Breast epithelium (tissue), 4 donors: ENCODE measurements at regions of chr14 and their contacts with region 1.

Region 1: GRCh38 chr14:101721951-101722661 is 39.4 kb upstream of the PPP2R5C start:
- DNase-seq: peak in 1 of 2 donors; percentile 55
- H3K4me3 ChIP-seq: no peak overlapping the region
- H3K27ac ChIP-seq: peak overlapping the region; percentile 70 to 71
- H3K4me1 ChIP-seq: no peaks in the 10 kb centered on the region
- H3K27me3 ChIP-seq: no peaks in the 10 kb centered on the region
- CTCF ChIP-seq: no peak
- POLR2A ChIP-seq: no peak

Region 2: DNA sequence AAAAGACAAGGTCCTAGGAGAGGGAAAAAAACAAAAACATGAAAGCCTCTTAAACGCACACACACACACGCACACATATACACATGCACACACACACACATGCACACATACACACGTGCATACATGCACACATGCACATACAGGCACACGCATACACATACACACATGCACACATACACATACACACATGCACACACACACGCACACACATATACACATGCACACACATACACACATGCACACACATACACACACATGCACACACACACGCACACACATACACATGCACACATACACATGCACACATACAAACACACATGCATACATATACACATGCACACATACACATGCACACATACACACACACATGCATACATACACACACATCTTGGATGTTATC is 38.7 kb before region 1 on chr14:
- intact Hi-C with region 1: loop called (anchors 2 kb)
- DNase-seq: no peak
- H3K4me3 ChIP-seq: no peak overlapping the region
- H3K27ac ChIP-seq: no peak overlapping the region
- H3K4me1 ChIP-seq: no peaks in the 10 kb centered on the region
- H3K27me3 ChIP-seq: no peaks in the 10 kb centered on the region
- CTCF ChIP-seq: no peak
- POLR2A ChIP-seq: no peak

Region 3: GRCh38 chr14:101737414-101738339 is 15.6 kb after region 1 on chr14:
- intact Hi-C with region 1: no loop called
- DNase-seq: no peak
- H3K4me3 ChIP-seq: no peak overlapping the region
- H3K27ac ChIP-seq: no peak overlapping the region
- H3K4me1 ChIP-seq: no peaks in the 10 kb centered on the region
- H3K27me3 ChIP-seq: no peaks in the 10 kb centered on the region
- CTCF ChIP-seq: no peak
- POLR2A ChIP-seq: no peak